ENCODE measurements at regions of chr1 and their contacts with region 1.

Region 1: GRCh38 chr1:189205863-189206262 is 1271.8 kb downstream of the BRINP3 start:
- DNase-seq: no peak
- H3K4me3 ChIP-seq: no peak overlapping the region
- H3K27ac ChIP-seq: no peak overlapping the region
- H3K4me1 ChIP-seq: no peaks in the 10 kb centered on the region
- H3K27me3 ChIP-seq: no peaks in the 10 kb centered on the region
- CTCF ChIP-seq: no peak
- POLR2A ChIP-seq: no peak

Region 2: DNA sequence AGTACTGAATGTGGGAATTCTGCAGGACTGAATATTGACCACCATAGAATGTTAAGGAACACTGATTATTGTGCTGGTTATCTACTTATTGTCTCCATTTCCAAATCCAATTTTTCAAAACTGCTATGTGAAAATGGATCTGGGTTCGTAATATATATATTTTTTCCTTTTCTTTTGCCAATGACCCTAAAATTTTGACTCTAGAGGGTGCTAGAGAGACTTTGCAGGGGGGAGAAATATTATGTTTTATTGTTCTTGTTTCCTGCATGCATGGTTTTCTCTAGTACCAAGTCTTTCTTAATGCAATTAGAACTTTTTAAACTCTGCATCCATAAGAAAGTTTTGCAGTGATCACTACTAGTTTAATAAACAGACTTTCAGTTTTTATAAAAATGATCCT is 14.9 kb after region 1 on chr1:
- CTCF ChIA-PET with region 1: interaction called, 13 read pairs
- POLR2A ChIA-PET with region 1: no interaction called
- dilution Hi-C with region 1: no loop called
- intact Hi-C with region 1: no loop called
- DNase-seq: peak; percentile 10
- H3K4me3 ChIP-seq: no peak overlapping the region
- H3K27ac ChIP-seq: no peak overlapping the region
- H3K4me1 ChIP-seq: no peaks in the 10 kb centered on the region
- H3K27me3 ChIP-seq: no peaks in the 10 kb centered on the region
- CTCF ChIP-seq: peak in 1 of 2 donors; percentile 24
- POLR2A ChIP-seq: no peak

Region 3: GRCh38 chr1:189357317-189357716 is 151.5 kb after region 1 on chr1:
- CTCF ChIA-PET with region 1: no interaction called
- POLR2A ChIA-PET with region 1: no interaction called
- dilution Hi-C with region 1: no loop called
- intact Hi-C with region 1: no loop called
- DNase-seq: no peak
- H3K4me3 ChIP-seq: no peak overlapping the region
- H3K27ac ChIP-seq: no peak overlapping the region
- H3K4me1 ChIP-seq: no peaks in the 10 kb centered on the region
- H3K27me3 ChIP-seq: no peaks in the 10 kb centered on the region
- CTCF ChIP-seq: no peak
- POLR2A ChIP-seq: no peak